ENCODE measurements at regions of chr1 and their contacts with region 1.

Region 1: GRCh38 chr1:36099681-36100341 is 11.1 kb downstream of the ADPRS start:
- DNase-seq: peak; percentile 75 to 83
- ATAC-seq: peak; percentile 81 to 91 (median 86)
- H3K4me3 ChIP-seq: peak overlapping the region in 4 of 10 donors; percentile 5 to 28 (median 11)
- H3K27ac ChIP-seq: no peak overlapping the region
- H3K4me1 ChIP-seq: peaks cover 0 to 29% (median 19%) of the 10 kb centered on the region in 9 donors
- H3K27me3 ChIP-seq: no peaks in the 10 kb centered on the region
- CTCF ChIP-seq: peak; percentile 68 to 89 (median 80)

Region 2: DNA sequence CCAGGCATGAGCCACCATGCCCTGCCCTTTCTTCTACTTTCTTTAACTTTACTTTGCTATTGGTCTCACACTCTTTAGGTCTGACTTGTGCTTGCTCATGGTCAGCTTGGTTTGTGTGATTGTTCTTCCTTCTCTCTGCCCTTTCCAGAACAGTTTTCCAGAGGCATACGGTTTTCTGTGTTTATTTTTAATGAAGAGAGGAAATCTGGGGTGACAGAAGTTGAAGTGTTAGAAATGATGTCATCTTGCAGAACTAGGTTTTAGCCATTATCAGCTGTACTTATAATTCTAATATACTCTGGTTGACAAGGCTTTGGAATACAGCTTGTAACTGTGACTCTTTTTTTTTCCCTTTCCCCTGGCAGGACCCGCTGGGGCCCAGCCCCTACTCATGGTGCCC is 154.5 kb before region 1 on chr1:
- intact Hi-C with region 1: no loop called
- DNase-seq: no peak
- ATAC-seq: no peak
- H3K4me3 ChIP-seq: no peak overlapping the region
- H3K27ac ChIP-seq: no peak overlapping the region
- H3K4me1 ChIP-seq: peaks cover 0 to 32% (median 20%) of the 10 kb centered on the region in 9 donors
- H3K27me3 ChIP-seq: no peaks in the 10 kb centered on the region
- CTCF ChIP-seq: no peak

Region 3: DNA sequence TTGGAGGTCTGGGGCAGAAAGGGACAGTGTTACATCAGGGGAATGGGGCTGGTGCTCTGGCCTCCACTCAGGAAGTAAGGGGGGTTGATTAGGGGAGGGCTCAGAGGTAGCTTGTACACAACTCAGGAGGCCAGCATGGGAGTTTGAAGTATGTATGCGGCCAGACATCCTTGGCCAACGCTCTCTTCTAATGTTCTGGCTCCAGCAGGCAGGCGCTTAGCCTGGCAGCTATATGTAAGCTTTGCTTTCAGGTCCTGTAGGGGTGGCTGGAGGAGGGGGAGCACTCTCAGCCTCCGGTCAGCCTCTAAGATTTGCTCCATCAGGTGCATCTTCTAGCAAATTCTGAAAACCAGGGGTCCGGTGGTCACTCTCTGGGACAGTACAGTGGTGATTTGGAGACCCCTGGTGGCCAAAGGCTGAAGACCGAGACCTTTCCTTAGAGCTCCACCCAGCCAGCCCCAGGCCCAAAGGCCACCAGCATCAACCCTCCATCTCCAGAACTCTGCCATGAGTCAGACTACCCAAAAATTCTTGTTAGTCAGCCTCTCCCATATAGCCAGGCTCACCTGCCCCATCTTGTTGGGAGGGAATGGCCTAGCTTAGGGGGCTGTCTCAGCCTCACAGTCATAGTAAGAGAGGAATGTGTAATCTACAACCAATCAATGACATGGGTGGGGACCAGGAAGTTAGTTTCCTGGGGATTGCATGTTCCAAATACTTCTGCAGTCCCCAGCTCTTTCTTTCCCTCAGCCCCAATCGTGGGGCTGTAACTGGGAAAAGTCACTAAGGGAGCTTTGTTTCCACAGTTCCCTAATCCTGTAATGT is 34.9 kb after region 1 on chr1:
- intact Hi-C with region 1: loop called in 9 of 10 experiments (anchors 1 to 5 kb)
- DNase-seq: peak in 1 of 2 donors; percentile 46
- ATAC-seq: peak; percentile 24 to 78 (median 62)
- H3K4me3 ChIP-seq: no peak overlapping the region
- H3K27ac ChIP-seq: peak overlapping the region in 7 of 10 donors; percentile 41 to 84 (median 73)
- H3K4me1 ChIP-seq: peaks cover 6 to 54% (median 41%) of the 10 kb centered on the region in 9 donors
- H3K27me3 ChIP-seq: no peaks in the 10 kb centered on the region
- CTCF ChIP-seq: peak; percentile 27 to 76 (median 69)

Region 4: DNA sequence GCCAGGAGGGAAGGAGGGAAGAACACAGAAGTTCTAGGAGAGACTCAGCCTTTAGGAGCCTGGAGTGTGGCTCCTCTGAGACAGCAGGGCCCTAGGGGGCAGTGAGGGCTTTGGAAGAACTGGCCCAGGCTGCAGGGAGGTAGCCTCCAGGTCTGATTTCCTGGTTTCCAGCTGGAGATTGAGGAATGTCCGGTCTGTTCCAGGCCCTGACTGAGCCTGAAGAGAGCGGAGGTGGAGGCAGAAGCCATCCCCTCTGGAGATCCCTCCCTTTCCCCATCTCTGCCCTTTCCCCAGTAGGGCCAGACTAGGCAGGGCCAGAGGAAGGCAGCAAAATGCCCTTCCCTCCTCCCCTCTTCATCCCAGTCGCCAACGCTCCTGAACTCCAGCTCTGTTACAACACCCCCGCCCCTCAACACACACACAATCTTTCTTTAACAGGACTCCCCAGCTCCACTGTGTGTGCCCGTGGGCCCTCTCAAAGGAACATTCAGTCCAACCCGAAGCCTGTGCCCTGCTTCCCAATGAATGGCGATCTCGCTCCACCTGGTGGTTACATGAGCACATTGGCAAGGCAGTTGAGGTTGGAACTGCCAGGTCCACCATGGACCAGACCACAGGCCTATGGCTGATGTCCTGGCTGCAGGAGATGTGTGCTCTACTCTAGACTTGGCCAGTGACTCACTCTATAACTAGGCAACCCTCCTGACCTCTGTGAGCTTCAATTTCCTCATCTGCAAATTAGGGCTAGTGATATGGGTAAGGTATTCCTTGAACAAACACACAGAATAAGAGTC is 88.2 kb after region 1 on chr1:
- intact Hi-C with region 1: loop called in 8 of 10 experiments (anchors 2 to 10 kb)
- DNase-seq: peak; percentile 76 to 90
- ATAC-seq: peak; percentile 91 to 97 (median 96)
- H3K4me3 ChIP-seq: peak overlapping the region in 2 of 10 donors; percentile 9 to 19
- H3K27ac ChIP-seq: peak overlapping the region; percentile 68 to 93 (median 83)
- H3K4me1 ChIP-seq: peaks cover 0 to 24% (median 10%) of the 10 kb centered on the region in 9 donors
- H3K27me3 ChIP-seq: no peaks in the 10 kb centered on the region
- CTCF ChIP-seq: peak; percentile 67 to 94 (median 86)

Region 5: GRCh38 chr1:36217670-36218069 is 117.9 kb after region 1 on chr1:
- intact Hi-C with region 1: loop called in 1 of 10 experiments (anchors 10 kb)
- DNase-seq: no peak
- ATAC-seq: peak in 6 of 8 donors; percentile 65 to 78 (median 72)
- H3K4me3 ChIP-seq: no peak overlapping the region
- H3K27ac ChIP-seq: peak overlapping the region in 3 of 10 donors; percentile 20 to 30 (median 27)
- H3K4me1 ChIP-seq: peaks cover 0 to 17% (median under 1%) of the 10 kb centered on the region in 9 donors
- H3K27me3 ChIP-seq: no peaks in the 10 kb centered on the region
- CTCF ChIP-seq: peak in 8 of 9 donors; percentile 7 to 62 (median 32)

Region 6: DNA sequence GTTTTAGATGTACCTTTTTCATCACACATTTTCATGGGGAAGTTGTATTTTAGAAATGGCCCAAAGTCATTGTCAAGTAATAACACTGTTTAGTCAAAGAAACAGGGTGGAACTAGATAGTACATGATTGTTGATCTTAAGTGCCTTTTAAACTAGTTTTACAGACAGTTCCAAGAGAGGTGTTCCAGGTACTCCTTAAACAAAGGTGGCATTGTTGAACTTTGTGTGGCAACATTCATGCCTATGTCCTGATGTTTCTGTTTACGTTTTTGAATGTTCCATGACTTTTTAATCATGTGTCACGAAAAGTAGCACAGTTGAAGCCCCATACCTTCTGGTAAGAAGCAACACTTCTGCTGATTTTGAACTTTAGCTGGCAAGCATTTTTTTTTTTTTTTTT is 197.3 kb after region 1 on chr1:
- intact Hi-C with region 1: loop called in 1 of 10 experiments (anchors 10 kb)
- DNase-seq: no peak
- ATAC-seq: no peak
- H3K4me3 ChIP-seq: no peak overlapping the region
- H3K27ac ChIP-seq: no peak overlapping the region
- H3K4me1 ChIP-seq: peaks cover 0 to 24% (median 11%) of the 10 kb centered on the region in 9 donors
- H3K27me3 ChIP-seq: no peaks in the 10 kb centered on the region
- CTCF ChIP-seq: no peak

Region 7: GRCh38 chr1:36420836-36421664 is 321.2 kb after region 1 on chr1:
- intact Hi-C with region 1: loop called in 9 of 10 experiments (anchors 1 to 10 kb)
- DNase-seq: peak; percentile 90 to 91
- ATAC-seq: peak; percentile 89 to 98 (median 94)
- H3K4me3 ChIP-seq: no peak overlapping the region
- H3K27ac ChIP-seq: peak overlapping the region in 2 of 10 donors; percentile 8 to 60
- H3K4me1 ChIP-seq: peaks cover 4 to 18% (median 13%) of the 10 kb centered on the region in 9 donors
- H3K27me3 ChIP-seq: no peaks in the 10 kb centered on the region
- CTCF ChIP-seq: peak; percentile 90 to 97 (median 95)

Measured in heart right ventricle (tissue), 16 donors.